Activated CD4-positive, alpha-beta T cell treated with anti-CD3 and anti-CD28 coated beads, Interleukin-2, amount 10 ng/mL, durations not matched to agents 7 days and 5 days (primary cell): ENCODE measurements at regions of chrX and their contacts with region 1.

Region 1: DNA sequence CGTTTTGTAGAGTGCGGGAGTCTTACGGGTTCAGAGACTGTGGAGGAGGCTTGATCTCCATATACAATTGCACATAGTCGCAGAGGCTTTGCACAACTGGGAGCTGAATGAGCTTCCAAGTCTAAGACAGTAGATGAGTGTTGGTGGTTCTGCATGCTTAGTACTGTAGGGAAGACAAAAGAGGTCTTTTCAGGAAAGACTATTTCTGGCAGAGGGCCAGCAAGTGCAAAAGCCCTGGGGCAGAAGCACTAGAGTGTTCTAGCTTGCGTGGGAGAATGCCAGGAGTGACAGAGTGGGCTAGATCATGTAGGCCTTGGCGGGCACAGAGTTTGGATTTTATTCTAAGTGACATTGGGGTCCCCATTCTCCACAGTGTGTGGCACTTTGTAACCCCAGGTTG is 24.4 kb downstream of the PNMA5 start:
- DNase-seq: no peak
- H3K4me3 Mint-ChIP-seq: no peak overlapping the region
- H3K27ac Mint-ChIP-seq: no peak overlapping the region
- H3K4me1 Mint-ChIP-seq: no peaks in the 10 kb centered on the region
- H3K27me3 Mint-ChIP-seq: no peaks in the 10 kb centered on the region

Region 2: DNA sequence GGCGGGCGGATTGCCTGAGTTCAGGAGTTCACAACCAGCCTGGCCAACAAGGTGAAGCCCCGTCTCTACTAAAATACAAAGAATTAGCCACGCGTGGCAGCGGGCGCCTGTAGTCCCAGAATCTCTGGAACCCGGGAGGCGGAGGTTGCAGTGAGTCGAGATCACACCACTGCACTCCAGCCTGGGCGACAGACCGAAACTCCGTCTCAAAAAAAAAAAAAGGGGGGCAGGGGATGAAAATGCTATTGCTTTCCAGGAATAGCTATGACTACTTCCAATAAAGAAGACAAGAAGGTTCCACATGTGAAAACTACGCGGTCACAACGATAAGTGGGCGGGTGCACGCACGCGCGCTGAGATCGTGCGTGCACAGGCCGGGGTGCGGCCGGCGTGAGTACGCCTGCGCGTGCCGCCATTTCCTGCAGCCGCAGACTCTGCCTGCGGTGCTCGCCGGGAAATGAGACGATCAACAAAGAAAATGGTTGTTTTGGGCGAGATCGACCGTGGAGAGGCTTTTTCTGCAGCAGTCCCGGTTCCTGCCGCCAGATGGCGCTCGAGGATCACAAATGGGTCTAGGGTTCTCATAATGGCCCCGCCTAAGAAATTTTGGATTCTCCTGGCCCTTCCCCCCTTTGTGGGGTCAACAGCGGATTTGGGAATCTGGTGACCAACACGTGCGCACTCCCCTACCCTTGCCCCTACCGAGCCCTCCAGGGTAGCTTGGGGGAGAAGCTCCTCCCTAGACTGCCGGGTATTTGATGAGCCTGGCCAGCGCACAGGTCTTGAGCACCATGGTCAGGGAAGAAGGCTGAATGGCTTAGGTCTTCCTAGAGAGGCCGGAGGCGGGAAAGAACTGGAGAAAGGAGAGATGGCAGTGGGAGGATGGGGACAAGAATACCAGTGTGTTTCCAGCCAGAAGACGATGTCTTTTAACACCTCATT is 10.8 kb before region 1 on chrX:
- CTCF ChIA-PET with region 1: interaction called, 18 read pairs
- POLR2A ChIA-PET with region 1: no interaction called
- DNase-seq: peak; percentile 89
- H3K4me3 Mint-ChIP-seq: peak overlapping the region; percentile 58
- H3K27ac Mint-ChIP-seq: peak overlapping the region; percentile 80
- H3K4me1 Mint-ChIP-seq: peaks cover 12% of the 10 kb centered on the region
- H3K27me3 Mint-ChIP-seq: no peaks in the 10 kb centered on the region